ENCODE measurements at regions of chr2 and their contacts with region 1.

Region 1: GRCh38 chr2:68362069-68362468 is 3.0 kb upstream of the PLEK start:
- DNase-seq: peak; percentile 79 to 88 (median 86)
- ATAC-seq: peak; percentile 82
- H3K4me3 ChIP-seq: no peak overlapping the region
- H3K27ac ChIP-seq: no peak overlapping the region; the same call in 2 of the 3 replicates
- H3K4me1 ChIP-seq: peaks cover 0 to 9% of the 10 kb centered on the region in 2 experiments; a peak in 3 of 5 replicates
- H3K27me3 ChIP-seq: no peaks in the 10 kb centered on the region
- CTCF ChIP-seq: peak; percentile 89 to 97 (median 95)
- EP300 ChIP-seq: peak; percentile 55
- POLR2A ChIP-seq: no peak
- RAD21 ChIP-seq: peak; percentile 98 to 99

Region 2: GRCh38 chr2:68251187-68251854 is 110.7 kb before region 1 on chr2:
- CTCF ChIA-PET with region 1: no interaction called
- POLR2A ChIA-PET with region 1: no interaction called
- in situ Hi-C with region 1: no loop called
- intact Hi-C with region 1: loop called (anchors 5 kb)
- DNase-seq: peak; percentile 61 to 88 (median 68)
- ATAC-seq: peak; percentile 80
- H3K4me3 ChIP-seq: peak overlapping the region; percentile 75
- H3K27ac ChIP-seq: peak overlapping the region; percentile 97
- H3K4me1 ChIP-seq: peaks cover 10 to 44% of the 10 kb centered on the region in 2 experiments; a peak in 4 of 5 replicates
- H3K27me3 ChIP-seq: no peaks in the 10 kb centered on the region
- CTCF ChIP-seq: peak; percentile 78 to 82 (median 78)
- EP300 ChIP-seq: 0 out of 2 replicates have a peak, but pooled peaks have one; percentile 12
- POLR2A ChIP-seq: peak; percentile 53
- RAD21 ChIP-seq: peak; percentile 49 to 57

Region 3: DNA sequence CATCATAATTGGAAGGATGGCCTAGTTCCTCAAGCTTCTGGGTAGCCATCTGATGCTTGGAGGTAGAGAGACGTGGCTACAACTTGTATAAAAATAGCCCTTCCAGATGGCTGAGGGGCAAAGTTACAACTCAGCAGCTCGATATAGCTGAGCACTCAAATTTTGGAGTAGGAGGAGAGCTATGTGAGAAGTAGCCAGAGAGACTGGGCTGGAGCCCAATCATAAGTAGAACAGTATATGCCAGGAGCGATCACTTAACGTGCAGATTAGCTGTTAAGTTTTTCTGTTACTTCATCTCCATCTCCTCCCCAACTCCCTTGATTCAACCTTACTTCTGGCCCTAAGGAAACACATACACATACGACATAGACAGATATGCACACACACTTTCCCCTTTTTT is 71.2 kb before region 1 on chr2:
- CTCF ChIA-PET with region 1: no interaction called
- POLR2A ChIA-PET with region 1: no interaction called
- in situ Hi-C with region 1: no loop called
- intact Hi-C with region 1: loop called (anchors 2 kb)
- DNase-seq: no peak
- ATAC-seq: peak; percentile 6; the same call in 1 of the 3 replicates
- H3K4me3 ChIP-seq: no peak overlapping the region
- H3K27ac ChIP-seq: no peak overlapping the region
- H3K4me1 ChIP-seq: peaks cover 14 to 34% of the 10 kb centered on the region in 2 experiments
- H3K27me3 ChIP-seq: no peaks in the 10 kb centered on the region
- CTCF ChIP-seq: no peak
- EP300 ChIP-seq: no peak
- POLR2A ChIP-seq: no peak
- RAD21 ChIP-seq: no peak

Region 4: GRCh38 chr2:68403199-68403644 is 41.2 kb after region 1 on chr2:
- CTCF ChIA-PET with region 1: no interaction called
- POLR2A ChIA-PET with region 1: no interaction called
- in situ Hi-C with region 1: no loop called
- intact Hi-C with region 1: loop called (anchors 2 kb)
- DNase-seq: peak in 2 of 4 experiments; percentile 49 to 88
- ATAC-seq: peak; percentile 93
- H3K4me3 ChIP-seq: no peak overlapping the region
- H3K27ac ChIP-seq: peak overlapping the region; percentile 62; the same call in 2 of the 3 replicates
- H3K4me1 ChIP-seq: peaks cover 12 to 22% of the 10 kb centered on the region in 2 experiments
- H3K27me3 ChIP-seq: no peaks in the 10 kb centered on the region
- CTCF ChIP-seq: no peak
- EP300 ChIP-seq: peak; percentile 5; the same call in 1 of the 2 replicates
- POLR2A ChIP-seq: no peak
- RAD21 ChIP-seq: peak; percentile 7 to 38; a peak in 1 of 4 replicates

Region 5: GRCh38 chr2:68441179-68441993 is 79.3 kb after region 1 on chr2:
- CTCF ChIA-PET with region 1: interaction called, 24 read pairs
- POLR2A ChIA-PET with region 1: interaction called, 3 read pairs
- in situ Hi-C with region 1: loop called (anchors 5 kb)
- intact Hi-C with region 1: loop called (anchors 1 kb)
- DNase-seq: peak; percentile 67 to 95 (median 72)
- ATAC-seq: peak; percentile 94
- H3K4me3 ChIP-seq: no peak overlapping the region
- H3K27ac ChIP-seq: peak overlapping the region; percentile 53; the same call in 2 of the 3 replicates
- H3K4me1 ChIP-seq: peaks cover 4 to 29% of the 10 kb centered on the region in 2 experiments; a peak in 4 of 5 replicates
- H3K27me3 ChIP-seq: no peaks in the 10 kb centered on the region
- CTCF ChIP-seq: peak; percentile 88 to 97 (median 96)
- EP300 ChIP-seq: peak; percentile 56; the same call in 1 of the 2 replicates
- POLR2A ChIP-seq: no peak
- RAD21 ChIP-seq: peak; percentile 99

Region 6: DNA sequence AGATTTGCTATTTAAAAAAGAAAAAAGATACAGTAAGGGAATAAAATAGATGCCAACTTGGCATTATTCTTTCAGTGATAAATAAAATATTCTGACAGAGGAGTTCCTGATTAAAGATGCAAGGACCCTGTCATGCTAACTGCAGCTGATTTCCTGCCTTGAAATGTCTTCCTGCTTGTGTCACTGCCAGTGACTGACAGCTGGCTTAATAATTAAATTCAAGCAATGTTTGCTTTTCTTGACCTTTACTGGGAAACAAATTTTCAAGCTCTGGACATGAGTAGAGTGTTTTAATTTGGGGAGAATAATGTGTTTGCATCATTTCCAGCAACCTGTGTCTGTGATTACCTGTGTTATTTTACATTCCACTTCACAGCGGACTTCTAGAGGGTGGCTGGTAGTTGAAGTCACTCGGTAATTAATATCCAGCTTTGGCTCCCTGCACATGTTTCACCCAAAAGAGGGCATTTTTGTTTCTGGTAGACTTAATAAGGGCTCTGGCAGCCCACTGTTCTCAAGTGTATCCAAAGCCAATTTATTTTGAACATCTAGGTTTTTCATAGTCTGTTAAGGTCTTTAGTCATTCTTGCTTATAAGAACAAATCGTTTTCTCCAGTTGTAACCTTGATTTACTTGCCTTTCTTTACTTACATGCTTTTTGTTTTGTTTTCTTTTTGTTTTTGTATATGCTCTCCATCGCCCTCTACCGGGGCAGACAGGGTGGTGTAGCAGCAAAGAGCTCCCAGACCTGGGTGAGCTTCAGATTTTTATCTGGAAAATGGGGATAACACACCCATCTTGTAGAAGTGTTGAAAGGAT is 232.8 kb after region 1 on chr2:
- CTCF ChIA-PET with region 1: no interaction called
- POLR2A ChIA-PET with region 1: no interaction called
- in situ Hi-C with region 1: no loop called
- intact Hi-C with region 1: no loop called
- DNase-seq: peak; percentile 75 to 78 (median 76)
- ATAC-seq: peak; percentile 86
- H3K4me3 ChIP-seq: no peak overlapping the region
- H3K27ac ChIP-seq: no peak overlapping the region
- H3K4me1 ChIP-seq: peaks cover 5 to 17% of the 10 kb centered on the region in 2 experiments; a peak in 3 of 5 replicates
- H3K27me3 ChIP-seq: no peaks in the 10 kb centered on the region
- CTCF ChIP-seq: peak; percentile 72 to 91 (median 80)
- EP300 ChIP-seq: no peak
- POLR2A ChIP-seq: no peak
- RAD21 ChIP-seq: peak in 1 of 2 experiments; percentile 62; a peak in 3 of 4 replicates